Activated CD4-positive, alpha-beta memory T cell treated with anti-CD3 and anti-CD28 coated beads for 36 hours (primary cell): ENCODE measurements at regions of chr19 and their contacts with region 1.

Region 1: GRCh38 chr19:17496337-17496997 is 15.0 kb upstream of the PGLS start:
- DNase-seq: peak; percentile 89
- H3K4me3 Mint-ChIP-seq: no peak overlapping the region
- H3K27ac Mint-ChIP-seq: no peak overlapping the region
- H3K4me1 Mint-ChIP-seq: peaks cover 15% of the 10 kb centered on the region
- H3K27me3 Mint-ChIP-seq: no peaks in the 10 kb centered on the region

Region 2: GRCh38 chr19:17390665-17391370 is 105.6 kb before region 1 on chr19:
- CTCF ChIA-PET with region 1: interaction called, 13 read pairs
- POLR2A ChIA-PET with region 1: no interaction called
- intact Hi-C with region 1: no loop called
- DNase-seq: peak; percentile 94
- H3K4me3 Mint-ChIP-seq: peak overlapping the region; percentile 81
- H3K27ac Mint-ChIP-seq: no peak overlapping the region
- H3K4me1 Mint-ChIP-seq: peaks cover 26% of the 10 kb centered on the region
- H3K27me3 Mint-ChIP-seq: no peaks in the 10 kb centered on the region

Region 3: DNA sequence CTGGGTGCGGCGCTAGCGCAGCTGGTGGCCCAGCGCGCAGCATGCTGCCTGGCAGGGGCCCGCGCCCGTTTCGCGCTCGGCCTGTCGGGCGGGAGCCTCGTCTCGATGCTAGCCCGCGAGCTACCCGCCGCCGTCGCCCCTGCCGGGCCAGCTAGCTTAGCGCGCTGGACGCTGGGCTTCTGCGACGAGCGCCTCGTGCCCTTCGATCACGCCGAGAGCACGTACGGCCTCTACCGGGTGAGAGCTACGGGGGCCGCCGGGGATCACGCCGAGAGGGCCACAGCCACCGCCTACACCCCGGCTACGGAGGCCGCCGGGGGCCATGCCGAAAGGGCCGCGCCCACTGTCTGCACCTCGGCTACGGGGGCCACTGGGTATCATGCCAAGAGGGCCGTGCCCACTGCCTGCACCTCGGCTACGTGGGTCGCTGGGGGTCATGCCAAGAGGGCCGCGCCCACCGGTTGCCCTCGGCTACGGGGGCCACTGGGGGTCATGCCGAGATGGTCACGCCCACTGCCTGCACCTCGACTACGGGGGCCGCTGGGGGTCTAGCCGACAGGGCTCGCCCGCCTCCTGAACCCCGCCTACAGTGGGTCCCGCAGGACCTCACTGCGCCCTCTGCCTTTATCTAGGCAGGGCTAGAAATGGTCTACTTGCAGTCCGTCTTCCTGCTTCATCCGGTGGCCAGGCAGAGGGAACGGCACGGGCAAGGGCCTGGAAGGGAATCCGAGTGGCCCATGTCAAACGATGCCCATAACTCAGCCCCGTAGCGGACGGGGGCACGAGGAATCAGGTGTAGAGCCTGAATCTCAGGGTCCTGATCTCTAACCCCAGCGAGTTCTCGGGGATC is 15.5 kb after region 1 on chr19:
- CTCF ChIA-PET with region 1: interaction called, 56 read pairs
- POLR2A ChIA-PET with region 1: interaction called, 3 read pairs
- intact Hi-C with region 1: no loop called
- DNase-seq: peak; percentile 90
- H3K4me3 Mint-ChIP-seq: peak overlapping the region; percentile 96
- H3K27ac Mint-ChIP-seq: peak overlapping the region; percentile 80
- H3K4me1 Mint-ChIP-seq: peaks cover 38% of the 10 kb centered on the region
- H3K27me3 Mint-ChIP-seq: no peaks in the 10 kb centered on the region

Region 4: GRCh38 chr19:17530586-17530985 is 34.1 kb after region 1 on chr19:
- CTCF ChIA-PET with region 1: interaction called, 14 read pairs
- POLR2A ChIA-PET with region 1: no interaction called
- intact Hi-C with region 1: no loop called
- DNase-seq: no peak
- H3K4me3 Mint-ChIP-seq: no peak overlapping the region
- H3K27ac Mint-ChIP-seq: no peak overlapping the region
- H3K4me1 Mint-ChIP-seq: peaks cover 4% of the 10 kb centered on the region
- H3K27me3 Mint-ChIP-seq: no peaks in the 10 kb centered on the region

Region 5: GRCh38 chr19:17570791-17571190 is 74.3 kb after region 1 on chr19:
- CTCF ChIA-PET with region 1: interaction called, 22 read pairs
- POLR2A ChIA-PET with region 1: no interaction called
- intact Hi-C with region 1: loop called (anchors 2 kb)
- DNase-seq: no peak
- H3K4me3 Mint-ChIP-seq: no peak overlapping the region
- H3K27ac Mint-ChIP-seq: no peak overlapping the region
- H3K4me1 Mint-ChIP-seq: no peaks in the 10 kb centered on the region
- H3K27me3 Mint-ChIP-seq: no peaks in the 10 kb centered on the region

Region 6: GRCh38 chr19:17859533-17860330 is 363.3 kb after region 1 on chr19 and contains the start of gene RPL18A:
- CTCF ChIA-PET with region 1: interaction called, 4 read pairs
- POLR2A ChIA-PET with region 1: no interaction called
- intact Hi-C with region 1: loop called (anchors 1 kb)
- DNase-seq: peak; percentile 100
- H3K4me3 Mint-ChIP-seq: peak within 1 kb of the TSS; percentile 100
- H3K27ac Mint-ChIP-seq: peak within 1 kb of the TSS; percentile 99
- H3K4me1 Mint-ChIP-seq: peaks cover 41% of the 10 kb centered on the region
- H3K27me3 Mint-ChIP-seq: peaks cover 3% of the 10 kb centered on the region
- total RNA-seq, gene RPL18A: 3,104 to 3,138 TPM